ENCODE measurements at regions of chr1 and their contacts with region 1.

Region 1: GRCh38 chr1:175481126-175482066 is 262.0 kb downstream of the TNR start:
- DNase-seq: peak; percentile 30
- H3K4me3 ChIP-seq: no peak overlapping the region
- H3K27ac ChIP-seq: no peak overlapping the region
- H3K4me1 ChIP-seq: no peaks in the 10 kb centered on the region
- H3K27me3 ChIP-seq: peaks cover 37% of the 10 kb centered on the region

Region 2: DNA sequence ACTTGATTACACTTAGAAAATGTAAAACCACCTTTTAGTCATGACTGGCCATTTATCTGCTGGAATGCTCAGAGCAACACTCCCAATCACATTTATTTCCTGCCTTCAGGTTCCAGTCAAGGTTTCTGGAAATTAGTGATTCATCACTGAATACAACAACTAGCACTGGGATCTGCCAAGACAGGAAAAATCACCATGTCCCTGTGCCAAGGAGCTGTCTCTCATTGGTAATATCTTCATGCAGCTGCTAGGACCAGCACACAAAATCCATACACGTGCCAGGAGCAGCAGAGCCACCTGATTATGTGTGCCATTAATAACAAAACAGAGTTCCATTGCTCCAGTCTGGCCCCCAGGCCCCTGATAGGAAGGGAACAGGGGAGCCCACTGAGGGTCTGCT is 67.4 kb after region 1 on chr1:
- in situ Hi-C with region 1: no loop called
- DNase-seq: no peak
- H3K4me3 ChIP-seq: no peak overlapping the region
- H3K27ac ChIP-seq: no peak overlapping the region
- H3K4me1 ChIP-seq: no peaks in the 10 kb centered on the region
- H3K27me3 ChIP-seq: no peaks in the 10 kb centered on the region

Region 3: DNA sequence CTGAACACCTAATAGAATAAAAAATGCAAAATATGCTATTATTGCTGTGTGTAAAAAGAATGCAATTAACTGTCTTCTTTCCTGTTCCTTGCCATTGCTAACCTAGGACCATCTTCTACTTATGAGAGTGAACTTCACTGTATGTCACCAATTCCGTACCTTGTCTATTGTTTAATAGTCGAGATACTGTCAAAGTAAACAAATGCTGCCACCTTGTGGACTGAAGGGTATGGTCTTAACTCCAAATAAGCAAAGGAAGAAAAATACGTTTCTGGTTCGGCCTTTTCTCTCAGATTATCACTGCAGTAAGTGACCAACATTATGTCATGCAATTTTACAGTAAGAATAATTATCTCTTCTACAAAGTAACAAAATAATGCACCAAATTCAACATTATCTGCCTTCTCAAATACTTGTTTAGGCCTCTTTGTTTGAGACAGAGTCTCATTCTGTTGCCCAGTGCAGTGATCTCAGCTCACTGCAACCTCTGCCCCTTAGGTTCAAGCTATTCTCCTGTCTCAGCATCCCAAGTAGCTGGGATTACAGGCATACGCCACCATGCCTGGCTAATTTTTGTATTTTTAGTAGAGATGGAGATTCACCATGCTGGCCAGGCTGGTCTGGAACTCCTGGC is 592.2 kb after region 1 on chr1:
- in situ Hi-C with region 1: loop called (anchors 25 kb)
- DNase-seq: peak; percentile 78
- H3K4me3 ChIP-seq: no peak overlapping the region
- H3K27ac ChIP-seq: no peak overlapping the region
- H3K4me1 ChIP-seq: peaks cover 6% of the 10 kb centered on the region; the same call in 1 of the 2 replicates
- H3K27me3 ChIP-seq: no peaks in the 10 kb centered on the region